ENCODE measurements at regions of chr1 and their contacts with region 1.

Region 1: DNA sequence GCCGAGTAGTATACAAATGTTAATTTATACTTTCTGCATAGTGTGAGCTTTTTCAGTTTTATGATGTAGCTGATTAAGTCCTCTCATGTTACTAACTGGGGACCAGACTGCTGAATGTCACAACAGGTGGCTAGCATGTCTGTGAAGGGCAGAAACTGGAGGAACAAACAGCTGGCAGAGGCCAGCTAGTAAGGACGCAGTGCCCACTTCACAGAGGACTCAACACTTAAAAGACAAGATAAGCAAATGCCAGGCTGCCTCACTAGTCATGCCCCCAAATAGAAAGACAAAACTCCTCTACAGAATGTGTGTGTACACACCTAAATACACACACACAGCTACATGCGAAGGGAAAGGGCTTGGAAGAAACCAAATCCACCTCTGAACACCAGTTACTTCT is 73.8 kb upstream of the ZNF678 start:
- DNase-seq: no peak
- H3K4me3 ChIP-seq: no peak overlapping the region
- H3K27ac ChIP-seq: no peak overlapping the region
- H3K4me1 ChIP-seq: no peaks in the 10 kb centered on the region
- H3K27me3 ChIP-seq: peaks cover 0 to 5% of the 10 kb centered on the region in 2 experiments
- CTCF ChIP-seq: no peak
- POLR2A ChIP-seq: no peak

Region 2: DNA sequence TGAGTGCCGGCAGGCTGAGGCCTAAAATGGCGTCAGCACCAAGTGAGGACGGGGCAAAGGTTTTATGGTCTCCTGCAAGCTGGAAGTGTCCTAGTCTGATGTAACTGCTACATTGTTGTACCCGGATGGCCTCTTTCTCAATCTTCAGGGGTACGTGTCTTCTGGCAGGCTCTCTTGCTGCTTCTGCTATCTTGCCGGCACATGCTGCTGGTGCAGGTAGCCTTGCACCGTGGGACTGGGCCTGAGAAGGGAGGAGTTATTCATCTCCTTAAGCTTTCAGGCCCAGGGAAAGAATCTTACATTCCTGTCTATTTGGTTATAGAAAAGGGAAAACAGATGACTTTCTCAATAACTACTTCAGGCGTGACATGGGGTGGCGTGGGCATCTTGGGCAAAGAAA is 146.0 kb after region 1 on chr1:
- CTCF ChIA-PET with region 1: no interaction called
- POLR2A ChIA-PET with region 1: no interaction called
- dilution Hi-C with region 1: no loop called
- intact Hi-C with region 1: loop called (anchors 10 kb)
- DNase-seq: no peak
- H3K4me3 ChIP-seq: no peak overlapping the region
- H3K27ac ChIP-seq: no peak overlapping the region
- H3K4me1 ChIP-seq: no peaks in the 10 kb centered on the region
- H3K27me3 ChIP-seq: no peaks in the 10 kb centered on the region
- CTCF ChIP-seq: no peak
- POLR2A ChIP-seq: no peak

Region 3: DNA sequence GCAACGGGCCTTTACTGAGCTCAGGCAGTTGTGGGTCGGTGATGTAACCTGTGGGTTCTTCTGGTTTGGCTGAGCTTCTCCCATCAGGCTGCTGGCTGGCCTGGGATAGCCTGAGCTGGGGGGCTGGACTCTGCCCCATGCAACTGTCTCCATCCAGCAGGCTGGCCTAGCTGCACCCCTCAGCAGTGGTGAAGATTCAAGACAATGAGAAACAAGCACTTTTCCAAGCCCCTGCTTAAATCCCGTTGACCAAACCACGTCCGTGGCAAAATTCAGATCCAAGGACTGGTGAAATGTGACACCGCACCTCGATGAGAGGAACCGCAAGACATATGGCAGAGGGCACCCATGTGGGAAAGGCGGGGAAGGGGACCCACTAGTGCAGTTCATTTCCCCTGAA is 351.5 kb after region 1 on chr1:
- CTCF ChIA-PET with region 1: no interaction called
- POLR2A ChIA-PET with region 1: no interaction called
- dilution Hi-C with region 1: no loop called
- intact Hi-C with region 1: no loop called
- DNase-seq: no peak
- H3K4me3 ChIP-seq: no peak overlapping the region
- H3K27ac ChIP-seq: no peak overlapping the region
- H3K4me1 ChIP-seq: no peaks in the 10 kb centered on the region
- H3K27me3 ChIP-seq: no peaks in the 10 kb centered on the region
- CTCF ChIP-seq: no peak
- POLR2A ChIP-seq: no peak